Panc1 (cell line): ENCODE measurements at regions of chrX and their contacts with region 1.

Region 1: GRCh38 chrX:47831788-47832187 is 4.9 kb upstream of the ZNF81 start:
- DNase-seq: peak; percentile 28
- ATAC-seq: peak; percentile 49; the same call in 1 of the 2 replicates
- H3K4me3 ChIP-seq: no peak overlapping the region
- H3K27ac ChIP-seq: no peak overlapping the region
- H3K4me1 ChIP-seq: peaks cover 3% of the 10 kb centered on the region; the same call in 1 of the 2 replicates
- H3K27me3 ChIP-seq: no peaks in the 10 kb centered on the region
- CTCF ChIP-seq: peak; percentile 84

Region 2: GRCh38 chrX:47540754-47541538 is 290.8 kb before region 1 on chrX:
- CTCF ChIA-PET with region 1: no interaction called
- POLR2A ChIA-PET with region 1: no interaction called
- in situ Hi-C with region 1: no loop called
- intact Hi-C with region 1: no loop called
- DNase-seq: peak; percentile 65
- ATAC-seq: peak; percentile 99
- H3K4me3 ChIP-seq: no peak overlapping the region; a peak in 1 of 4 replicates
- H3K27ac ChIP-seq: peak overlapping the region; percentile 68
- H3K4me1 ChIP-seq: 0 out of 2 replicates have a peak, but pooled peaks cover 3% of the 10 kb centered on the region
- H3K27me3 ChIP-seq: no peaks in the 10 kb centered on the region
- CTCF ChIP-seq: peak; percentile 75

Region 3: GRCh38 chrX:48021026-48021900 is 189.5 kb after region 1 on chrX:
- CTCF ChIA-PET with region 1: no interaction called
- POLR2A ChIA-PET with region 1: no interaction called
- in situ Hi-C with region 1: no loop called
- intact Hi-C with region 1: loop called (anchors 2 kb)
- DNase-seq: no peak
- ATAC-seq: peak; percentile 91
- H3K4me3 ChIP-seq: peak overlapping the region; percentile 59 to 68
- H3K27ac ChIP-seq: peak overlapping the region; percentile 99
- H3K4me1 ChIP-seq: no peaks in the 10 kb centered on the region; the same call in 1 of the 2 replicates
- H3K27me3 ChIP-seq: no peaks in the 10 kb centered on the region
- CTCF ChIP-seq: no peak

Region 4: GRCh38 chrX:49226946-49227345 is 1395.2 kb after region 1 on chrX:
- CTCF ChIA-PET with region 1: interaction called, 10 read pairs
- POLR2A ChIA-PET with region 1: no interaction called
- in situ Hi-C with region 1: no loop called
- intact Hi-C with region 1: no loop called
- DNase-seq: no peak
- ATAC-seq: no peak
- H3K4me3 ChIP-seq: no peak overlapping the region
- H3K27ac ChIP-seq: no peak overlapping the region
- H3K4me1 ChIP-seq: no peaks in the 10 kb centered on the region
- H3K27me3 ChIP-seq: no peaks in the 10 kb centered on the region
- CTCF ChIP-seq: no peak